Lower leg skin (tissue), 4 donors: ENCODE measurements at regions of chr5 and their contacts with region 1.

Region 1: GRCh38 chr5:112419986-112420864 is 1.1 kb upstream of the EPB41L4A start:
- DNase-seq: peak; percentile 74 to 96
- H3K4me3 ChIP-seq: peak overlapping the region; percentile 84
- CTCF ChIP-seq: peak in 1 of 3 donors; percentile 23
- POLR2A ChIP-seq: no peak

Region 2: GRCh38 chr5:111187079-111187478 is 1233.1 kb before region 1 on chr5:
- intact Hi-C with region 1: loop called (anchors 5 kb)
- DNase-seq: no peak
- H3K4me3 ChIP-seq: no peak overlapping the region
- CTCF ChIP-seq: no peak
- POLR2A ChIP-seq: no peak

Region 3: GRCh38 chr5:111680737-111681413 is 739.4 kb before region 1 on chr5:
- intact Hi-C with region 1: loop called (anchors 5 kb)
- DNase-seq: peak in 1 of 2 donors; percentile 82
- H3K4me3 ChIP-seq: no peak overlapping the region
- CTCF ChIP-seq: no peak
- POLR2A ChIP-seq: no peak

Region 4: GRCh38 chr5:112795944-112796678 is 375.9 kb after region 1 on chr5:
- intact Hi-C with region 1: no loop called
- DNase-seq: no peak
- H3K4me3 ChIP-seq: no peak overlapping the region
- CTCF ChIP-seq: no peak
- POLR2A ChIP-seq: no peak